ENCODE measurements at regions of chr1 and their contacts with region 1.

Region 1: GRCh38 chr1:74771913-74772515 is 39.1 kb downstream of the TYW3 start:
- DNase-seq: peak in 18 of 42 donors; percentile 3 to 71 (median 30)

Region 2: DNA sequence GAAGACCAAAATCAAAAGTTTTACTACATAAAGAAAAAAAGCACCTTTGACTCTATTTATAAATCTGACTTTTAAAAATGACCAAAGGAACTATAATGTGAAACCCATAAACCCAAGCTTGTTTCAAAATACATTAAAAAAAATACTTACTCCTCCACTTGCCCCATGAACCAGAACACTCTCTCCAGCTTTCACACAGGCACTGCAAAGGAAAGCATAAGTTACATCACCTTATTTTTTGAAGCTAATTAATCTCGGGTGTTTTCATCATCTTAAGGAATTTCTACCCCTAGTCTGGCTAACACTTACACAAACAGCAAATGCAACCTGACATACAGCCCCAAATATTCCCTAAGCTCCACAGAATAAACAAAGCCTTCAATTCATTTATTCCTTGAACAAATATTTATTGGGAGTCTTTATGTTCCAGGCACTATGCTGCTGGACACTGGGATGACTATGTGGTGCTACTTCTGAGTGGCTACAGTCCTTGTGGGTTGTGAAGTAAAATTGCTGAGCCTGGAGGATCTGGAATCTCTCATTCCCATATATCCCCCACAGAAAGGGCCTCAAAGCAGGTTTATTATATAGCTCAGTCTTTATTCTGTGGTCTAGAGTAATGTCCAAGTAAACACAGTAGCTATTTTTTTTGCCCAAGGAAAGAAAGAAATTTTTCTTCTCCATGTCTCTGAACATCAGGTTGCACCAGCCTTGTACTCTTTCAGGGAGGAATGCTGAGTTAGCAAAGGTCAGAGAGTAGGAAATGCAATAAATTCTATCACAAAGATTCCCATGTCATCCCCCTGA is 57.4 kb before region 1 on chr1:
- intact Hi-C with region 1: no loop called
- DNase-seq: no peak

Region 3: GRCh38 chr1:74733604-74734484 is 38.2 kb before region 1 on chr1:
- intact Hi-C with region 1: no loop called
- DNase-seq: peak in 30 of 42 donors; percentile 4 to 79 (median 46)

Region 4: GRCh38 chr1:75203415-75204277 is 431.6 kb after region 1 on chr1:
- intact Hi-C with region 1: loop called (anchors 5 kb)
- DNase-seq: peak in 4 of 42 donors; percentile 2 to 29 (median 14)

Measured in head of caudate nucleus (tissue), 42 donors.